ENCODE measurements at regions of chr7 and their contacts with region 1.

Region 1: GRCh38 chr7:143008007-143008901 is 18.7 kb downstream of the OR9A2 start:
- DNase-seq: peak; percentile 68
- H3K4me3 Mint-ChIP-seq: no peak overlapping the region
- H3K27ac Mint-ChIP-seq: no peak overlapping the region
- H3K4me1 Mint-ChIP-seq: peaks cover 5% of the 10 kb centered on the region
- H3K27me3 Mint-ChIP-seq: peaks cover 12% of the 10 kb centered on the region

Region 2: DNA sequence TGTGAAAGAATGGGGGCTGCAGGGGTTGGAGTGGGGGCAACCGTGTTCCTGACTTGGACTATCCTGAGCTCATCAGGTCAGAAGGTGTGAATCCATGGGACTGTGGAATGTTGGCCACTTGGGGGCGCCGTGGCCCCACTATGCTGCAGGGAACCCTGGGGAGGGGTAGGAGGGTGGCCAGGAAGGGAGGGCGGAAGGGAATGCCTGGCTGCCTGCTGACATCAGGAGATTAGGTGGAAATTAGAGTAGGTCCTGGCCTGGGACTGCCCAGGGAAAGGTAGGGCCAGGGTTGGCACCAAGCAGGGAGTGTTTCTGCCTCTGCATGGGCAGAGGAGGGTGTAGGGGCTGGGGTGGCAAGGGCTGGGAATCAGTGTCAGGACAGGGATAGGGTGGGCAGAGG is 684.5 kb before region 1 on chr7:
- intact Hi-C with region 1: loop called (anchors 2 kb)
- DNase-seq: no peak
- H3K4me3 Mint-ChIP-seq: no peak overlapping the region
- H3K27ac Mint-ChIP-seq: no peak overlapping the region
- H3K4me1 Mint-ChIP-seq: no peaks in the 10 kb centered on the region
- H3K27me3 Mint-ChIP-seq: peaks cover 5% of the 10 kb centered on the region

Region 3: DNA sequence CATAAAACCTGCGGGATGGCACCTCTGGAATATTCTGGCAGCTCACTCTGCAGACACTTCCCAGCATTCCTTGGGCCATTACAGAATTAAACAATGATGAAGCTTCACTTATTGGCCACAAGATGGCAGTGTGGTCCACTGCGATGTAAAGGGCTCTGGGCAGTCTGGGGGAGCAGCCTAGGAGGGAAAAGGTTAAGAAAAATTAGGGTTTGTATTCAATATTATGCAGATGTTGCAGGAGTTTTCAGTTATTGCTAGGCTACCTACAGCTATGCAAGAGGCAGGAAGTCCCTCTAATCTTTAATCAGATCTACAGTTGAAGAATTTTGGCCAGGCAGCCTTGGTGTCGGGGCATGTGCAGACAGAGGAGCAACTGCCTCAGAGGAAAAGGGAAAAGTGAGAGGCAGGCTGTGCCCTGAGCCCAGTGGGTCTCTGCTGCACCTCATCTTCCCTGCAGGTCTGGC is 492.2 kb before region 1 on chr7:
- intact Hi-C with region 1: loop called (anchors 2 kb)
- DNase-seq: no peak
- H3K4me3 Mint-ChIP-seq: no peak overlapping the region
- H3K27ac Mint-ChIP-seq: no peak overlapping the region
- H3K4me1 Mint-ChIP-seq: peaks cover 19% of the 10 kb centered on the region
- H3K27me3 Mint-ChIP-seq: peaks cover 7% of the 10 kb centered on the region

Region 4: DNA sequence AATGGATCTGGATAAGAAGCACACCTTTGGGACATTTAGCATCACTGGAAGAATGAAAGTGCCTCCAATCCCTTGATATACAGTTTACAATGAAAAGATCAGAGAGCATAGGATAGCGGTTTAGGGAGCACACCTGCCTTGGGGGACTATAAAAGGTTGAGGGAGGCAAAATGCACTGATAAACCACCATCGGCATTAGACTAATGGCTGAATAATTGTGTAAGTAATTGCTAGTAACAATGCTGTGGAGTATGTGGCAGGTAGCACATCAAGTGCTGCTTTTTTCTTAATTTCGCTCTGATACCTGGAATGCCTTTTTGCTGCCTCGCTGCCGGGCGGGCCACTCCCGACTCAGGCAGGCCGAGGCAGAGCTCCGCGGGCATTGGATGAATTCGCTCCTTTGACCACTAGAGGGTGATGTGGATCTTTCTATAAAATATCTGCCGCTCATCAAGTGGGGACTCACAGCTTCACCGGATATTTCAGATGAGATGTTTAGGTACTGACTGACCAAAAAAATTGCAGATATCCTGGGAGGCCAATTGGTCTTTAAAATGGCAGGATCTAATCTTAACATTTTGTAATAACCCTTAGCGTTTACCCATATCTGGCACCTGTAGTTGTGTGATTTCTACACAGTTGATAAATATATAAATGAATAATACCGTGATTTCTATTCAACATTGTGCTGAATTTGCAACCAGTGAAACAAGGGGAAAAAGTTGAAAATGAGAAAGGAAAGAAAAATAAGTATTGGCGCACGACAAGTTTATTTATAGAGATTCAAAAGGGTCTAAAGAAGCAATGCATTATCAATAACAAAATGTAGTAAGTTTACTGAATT is 375.7 kb before region 1 on chr7:
- intact Hi-C with region 1: loop called (anchors 1 kb)
- DNase-seq: peak; percentile 49
- H3K4me3 Mint-ChIP-seq: no peak overlapping the region
- H3K27ac Mint-ChIP-seq: no peak overlapping the region
- H3K4me1 Mint-ChIP-seq: peaks cover 18% of the 10 kb centered on the region
- H3K27me3 Mint-ChIP-seq: peaks cover 11% of the 10 kb centered on the region

Region 5: DNA sequence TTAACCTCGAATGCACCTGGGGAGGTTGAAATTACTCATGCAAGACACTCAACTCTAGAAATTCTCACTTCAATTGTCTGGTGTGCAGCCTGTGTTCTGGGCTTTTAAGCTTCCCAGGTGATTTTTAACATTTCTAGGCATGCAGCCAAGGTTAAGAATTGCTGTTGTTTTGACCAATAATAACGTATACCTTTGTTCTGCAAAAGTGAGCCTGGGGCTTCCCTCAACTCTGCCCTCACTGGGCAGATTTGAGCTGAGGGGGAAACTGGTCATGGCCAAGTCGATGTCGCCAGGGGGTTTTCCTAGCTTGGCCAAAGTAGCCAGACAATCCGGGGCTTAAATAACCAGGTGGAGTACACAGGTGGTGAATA is 236.9 kb before region 1 on chr7:
- intact Hi-C with region 1: no loop called
- DNase-seq: no peak
- H3K4me3 Mint-ChIP-seq: no peak overlapping the region
- H3K27ac Mint-ChIP-seq: no peak overlapping the region
- H3K4me1 Mint-ChIP-seq: peaks cover 11% of the 10 kb centered on the region
- H3K27me3 Mint-ChIP-seq: peaks cover 10% of the 10 kb centered on the region

Region 6: DNA sequence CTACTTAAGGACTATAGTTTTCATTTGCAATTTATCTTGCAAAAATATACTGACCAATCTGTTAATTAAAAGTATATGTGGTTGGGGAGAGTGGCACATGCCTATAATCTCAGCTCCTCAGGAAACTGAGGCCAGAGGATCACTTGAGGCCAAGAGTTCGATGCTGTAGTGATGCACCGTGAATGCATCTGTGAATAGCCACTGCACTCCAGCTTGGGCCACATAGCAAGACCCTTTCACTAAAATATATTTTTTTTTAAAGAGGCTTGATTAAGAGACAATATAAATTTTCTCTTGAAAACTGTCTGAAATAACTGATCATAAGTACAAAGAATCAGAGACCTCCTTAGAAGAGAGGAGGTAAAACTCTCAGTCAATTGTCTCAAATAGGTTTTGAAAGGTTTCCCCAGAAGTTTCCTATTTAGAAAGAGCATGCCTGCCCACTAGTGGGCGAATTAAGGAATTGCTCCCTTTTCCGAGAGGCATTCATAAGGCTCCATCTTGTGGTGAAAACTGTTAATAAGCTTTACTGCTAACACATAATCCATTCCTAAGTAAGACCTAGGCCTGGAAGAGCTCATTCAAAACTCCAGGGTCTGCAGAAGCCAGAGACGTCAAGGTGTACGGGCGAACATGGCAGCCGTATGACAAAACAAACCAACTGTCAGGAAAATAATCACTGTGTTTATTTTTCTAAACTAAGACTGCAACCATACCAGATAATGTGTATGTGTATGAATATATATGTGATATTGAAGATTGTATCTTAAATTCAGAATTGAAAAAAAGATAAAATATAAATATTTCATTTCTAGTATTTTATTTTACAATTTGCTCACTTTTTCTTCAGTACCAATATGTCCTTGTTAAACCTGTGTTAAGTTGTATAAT is 206.8 kb after region 1 on chr7:
- intact Hi-C with region 1: loop called (anchors 1 kb)
- DNase-seq: peak; percentile 57
- H3K4me3 Mint-ChIP-seq: no peak overlapping the region
- H3K27ac Mint-ChIP-seq: no peak overlapping the region
- H3K4me1 Mint-ChIP-seq: no peaks in the 10 kb centered on the region
- H3K27me3 Mint-ChIP-seq: peaks cover 14% of the 10 kb centered on the region

Measured in activated T-helper 1 cell treated with anti-CD3 and anti-CD28 coated beads, Interleukin-12 subunit alpha, Interleukin-12 subunit beta, Interleukin-2, Interleukin-4 antibody, amounts not matched to agents 30 ng/mL and 10 ng/mL and 1 ng/mL, durations not matched to agents 14 hours and 24 hours and 36 hours (primary cell).